ENCODE measurements at regions of chr20 and their contacts with region 1.

Region 1: DNA sequence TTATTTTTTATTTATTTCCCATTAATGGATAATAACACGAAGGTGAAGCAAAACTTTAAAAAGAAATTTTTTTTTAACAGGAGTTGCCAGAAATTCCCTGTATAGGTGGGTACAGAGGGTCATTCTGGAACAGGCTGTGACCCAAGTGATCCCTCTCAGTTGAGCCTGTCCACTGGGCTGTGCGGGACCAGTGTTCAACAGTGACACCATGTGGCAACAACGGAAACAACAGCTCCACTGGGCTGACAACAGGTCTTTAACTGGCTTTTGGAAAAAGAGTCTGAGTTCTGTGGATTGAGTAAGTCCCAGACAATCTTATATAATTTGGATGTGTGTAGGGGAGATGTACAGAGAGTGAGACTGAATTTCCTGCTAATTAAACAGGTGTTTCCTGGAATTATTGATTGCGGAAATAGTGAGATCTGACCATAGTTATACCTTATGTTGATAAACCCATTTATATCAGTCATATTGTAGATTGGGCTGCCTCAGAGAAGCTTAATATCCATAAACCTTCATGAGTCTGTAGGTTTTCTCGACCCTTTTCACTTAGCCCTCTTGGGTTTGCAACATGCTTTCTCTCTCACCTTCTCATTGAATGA is 17.6 kb downstream of the KIAA1755 start:
- DNase-seq: peak; percentile 50
- ATAC-seq: no peak
- H3K4me3 ChIP-seq: no peak overlapping the region
- H3K27ac ChIP-seq: no peak overlapping the region
- H3K4me1 ChIP-seq: no peaks in the 10 kb centered on the region
- H3K27me3 ChIP-seq: no peaks in the 10 kb centered on the region
- CTCF ChIP-seq: peak; percentile 86

Region 2: GRCh38 chr20:38221119-38221589 is 21.8 kb before region 1 on chr20:
- CTCF ChIA-PET with region 1: no interaction called
- POLR2A ChIA-PET with region 1: no interaction called
- intact Hi-C with region 1: no loop called
- DNase-seq: peak; percentile 92
- ATAC-seq: peak; percentile 72
- H3K4me3 ChIP-seq: peak overlapping the region; percentile 14; the same call in 1 of the 2 replicates
- H3K27ac ChIP-seq: peak overlapping the region; percentile 18; the same call in 1 of the 2 replicates
- H3K4me1 ChIP-seq: peaks cover 36% of the 10 kb centered on the region
- H3K27me3 ChIP-seq: no peaks in the 10 kb centered on the region
- CTCF ChIP-seq: peak; percentile 97

Region 3: DNA sequence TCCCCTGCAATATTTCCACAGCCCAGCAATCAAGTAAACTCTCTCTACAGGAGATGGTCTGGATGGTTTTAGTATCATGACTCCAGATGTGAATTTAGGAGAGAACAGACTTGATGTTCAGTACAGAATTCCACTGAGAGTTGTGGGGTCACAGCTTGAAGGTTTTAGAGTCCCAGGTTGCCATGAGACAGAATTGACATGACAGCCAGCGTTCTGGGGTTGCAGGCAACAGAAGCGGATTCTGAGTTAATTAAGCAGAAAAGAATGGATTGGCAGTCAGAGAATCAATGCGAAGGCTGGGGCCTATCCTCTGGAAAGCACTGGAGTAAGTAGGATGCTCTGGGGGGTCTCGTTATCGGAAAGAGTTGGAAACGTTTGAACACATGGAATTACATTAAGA is 20.0 kb after region 1 on chr20:
- CTCF ChIA-PET with region 1: no interaction called
- POLR2A ChIA-PET with region 1: no interaction called
- intact Hi-C with region 1: loop called (anchors 2 kb)
- DNase-seq: no peak
- ATAC-seq: no peak
- H3K4me3 ChIP-seq: no peak overlapping the region
- H3K27ac ChIP-seq: no peak overlapping the region
- H3K4me1 ChIP-seq: no peaks in the 10 kb centered on the region
- H3K27me3 ChIP-seq: no peaks in the 10 kb centered on the region
- CTCF ChIP-seq: no peak

Region 4: GRCh38 chr20:38353323-38353722 is 110.4 kb after region 1 on chr20:
- CTCF ChIA-PET with region 1: interaction called, 16 read pairs
- POLR2A ChIA-PET with region 1: no interaction called
- intact Hi-C with region 1: no loop called
- DNase-seq: no peak
- ATAC-seq: no peak
- H3K4me3 ChIP-seq: no peak overlapping the region
- H3K27ac ChIP-seq: no peak overlapping the region
- H3K4me1 ChIP-seq: peaks cover 10% of the 10 kb centered on the region
- H3K27me3 ChIP-seq: no peaks in the 10 kb centered on the region
- CTCF ChIP-seq: no peak